Cardiac septum (tissue), 1 donor: ENCODE measurements at regions of chr3 and their contacts with region 1.

Region 1: GRCh38 chr3:66500576-66501482 is at the start of gene LRIG1:
- DNase-seq: peak; percentile 100
- total RNA-seq, gene LRIG1: 77.1 TPM

Region 2: GRCh38 chr3:66276705-66277274 is 224.0 kb before region 1 on chr3:
- intact Hi-C with region 1: loop called (anchors 5 kb)
- DNase-seq: no peak

Region 3: GRCh38 chr3:66407611-66408218 is 93.1 kb before region 1 on chr3:
- intact Hi-C with region 1: loop called (anchors 2 kb)
- DNase-seq: peak; percentile 90

Region 4: DNA sequence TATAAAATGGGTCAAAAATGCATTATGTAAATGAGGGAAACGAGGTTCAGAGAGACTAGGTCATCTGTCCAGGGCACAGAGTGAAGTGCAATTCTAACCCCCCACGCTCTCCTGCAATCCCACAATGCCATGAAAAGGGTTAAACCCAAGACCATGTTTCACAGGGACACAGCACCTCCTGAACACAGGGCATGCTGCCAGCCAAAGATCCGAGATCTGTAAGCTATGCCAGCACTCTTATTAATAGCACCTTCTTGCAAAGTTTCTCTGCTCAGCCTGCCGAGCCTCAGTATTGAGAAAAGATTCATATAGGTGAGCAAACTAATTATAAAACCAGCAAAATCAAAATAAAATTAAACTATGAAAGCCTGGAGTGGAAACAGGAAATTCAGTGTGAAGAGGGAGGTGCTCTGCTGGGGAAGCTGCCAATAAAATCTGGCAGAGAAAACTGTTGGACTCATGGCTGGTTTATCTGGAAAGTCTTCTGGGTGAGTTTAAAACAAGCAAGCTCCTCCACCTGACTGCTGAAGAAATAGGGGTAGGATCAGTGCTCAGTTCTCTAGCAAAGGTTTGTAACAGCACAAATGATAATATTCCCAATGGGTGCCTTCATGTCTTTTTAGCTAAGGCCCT is 50.3 kb before region 1 on chr3:
- intact Hi-C with region 1: loop called (anchors 2 kb)
- DNase-seq: peak; percentile 78

Region 5: DNA sequence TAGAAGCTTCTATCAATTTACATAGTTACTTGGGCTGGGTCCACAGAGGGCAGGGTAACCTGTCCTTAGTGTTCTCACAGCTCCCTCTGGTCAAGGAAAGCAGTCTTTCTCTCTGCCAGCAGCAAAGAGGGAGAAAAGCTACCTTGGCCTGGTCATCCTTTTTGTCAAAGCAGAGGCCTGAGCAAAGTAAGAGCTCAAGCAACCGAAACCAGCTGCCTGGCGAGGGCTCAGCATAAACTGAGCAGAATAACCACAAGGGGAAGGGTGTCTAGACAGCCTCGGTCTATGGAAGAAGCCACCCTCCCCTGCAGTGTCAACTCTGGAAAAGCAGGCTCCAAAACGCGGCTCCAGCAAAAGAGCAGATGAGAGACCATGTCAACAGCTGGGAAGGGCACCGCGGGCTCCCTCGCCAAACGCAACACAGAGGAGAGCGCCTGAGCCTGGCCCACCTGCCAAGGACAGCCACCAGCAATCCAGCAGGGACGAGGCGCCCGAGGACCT is 17.4 kb before region 1 on chr3:
- intact Hi-C with region 1: loop called (anchors 2 kb)
- DNase-seq: peak; percentile 83

Region 6: GRCh38 chr3:66615643-66616301 is 114.9 kb after region 1 on chr3:
- intact Hi-C with region 1: loop called (anchors 5 kb)
- DNase-seq: no peak

Region 7: DNA sequence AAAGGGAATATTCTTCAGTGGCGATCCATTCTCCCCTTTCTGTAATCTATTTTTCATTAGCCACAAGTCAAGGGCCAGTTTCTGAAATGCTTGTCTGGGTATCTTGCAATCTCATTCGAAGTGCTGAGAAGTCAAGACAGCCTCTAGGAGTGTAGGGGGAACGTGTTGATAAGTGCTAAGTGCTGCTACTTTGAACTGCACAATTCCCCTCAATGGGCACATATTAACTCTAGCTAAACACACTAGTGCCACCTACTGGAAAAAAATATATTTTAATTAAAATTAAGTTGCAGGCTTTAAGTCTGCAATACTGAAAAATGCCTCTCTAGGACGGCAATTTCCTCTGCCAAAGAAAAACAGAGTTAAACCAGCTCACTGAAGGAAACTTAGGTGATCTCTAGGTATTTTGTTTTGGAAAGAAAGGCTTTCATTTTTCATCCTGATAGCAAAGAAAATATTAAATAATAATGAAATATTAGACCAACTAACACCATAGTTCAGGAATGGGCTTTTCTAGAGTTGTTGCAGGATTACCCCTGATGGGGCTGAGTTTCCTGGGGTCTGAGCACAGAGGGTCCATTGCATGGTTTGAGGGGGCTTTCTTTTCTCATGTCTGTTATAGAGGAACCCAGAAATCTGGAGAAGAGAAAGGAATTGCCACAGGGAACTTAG is 315.4 kb after region 1 on chr3:
- intact Hi-C with region 1: loop called (anchors 10 kb)
- DNase-seq: no peak

Region 8: GRCh38 chr3:66827726-66828125 is 326.9 kb after region 1 on chr3:
- intact Hi-C with region 1: no loop called
- DNase-seq: no peak